ENCODE measurements at regions of chr9 and their contacts with region 1.

Region 1: GRCh38 chr9:33858346-33858885 is 41.5 kb downstream of the UBE2R2 start:
- DNase-seq: peak; percentile 26
- ATAC-seq: peak; percentile 31; the same call in 1 of the 2 replicates
- H3K4me3 ChIP-seq: no peak overlapping the region
- H3K27ac ChIP-seq: 0 out of 2 replicates have a peak overlapping the region, but pooled peaks have one; percentile 16
- H3K4me1 ChIP-seq: no peaks in the 10 kb centered on the region
- H3K27me3 ChIP-seq: no peaks in the 10 kb centered on the region
- CTCF ChIP-seq: no peak

Region 2: GRCh38 chr9:33623658-33624586 is 234.5 kb before region 1 on chr9:
- CTCF ChIA-PET with region 1: no interaction called
- POLR2A ChIA-PET with region 1: no interaction called
- intact Hi-C with region 1: no loop called
- DNase-seq: peak; percentile 88
- ATAC-seq: peak; percentile 86
- H3K4me3 ChIP-seq: no peak overlapping the region
- H3K27ac ChIP-seq: no peak overlapping the region
- H3K4me1 ChIP-seq: peaks cover 24% of the 10 kb centered on the region
- H3K27me3 ChIP-seq: no peaks in the 10 kb centered on the region
- CTCF ChIP-seq: peak; percentile 73

Region 3: GRCh38 chr9:33737811-33738606 is 120.4 kb before region 1 on chr9:
- CTCF ChIA-PET with region 1: no interaction called
- POLR2A ChIA-PET with region 1: no interaction called
- intact Hi-C with region 1: loop called (anchors 2 kb)
- DNase-seq: peak; percentile 63
- ATAC-seq: peak; percentile 78
- H3K4me3 ChIP-seq: no peak overlapping the region
- H3K27ac ChIP-seq: peak overlapping the region; percentile 50
- H3K4me1 ChIP-seq: peaks cover 29% of the 10 kb centered on the region
- H3K27me3 ChIP-seq: no peaks in the 10 kb centered on the region
- CTCF ChIP-seq: peak; percentile 71

Measured in PC-3 (cell line).